HEK293T (cell line): ENCODE measurements at regions of chr19 and their contacts with region 1.

Region 1: DNA sequence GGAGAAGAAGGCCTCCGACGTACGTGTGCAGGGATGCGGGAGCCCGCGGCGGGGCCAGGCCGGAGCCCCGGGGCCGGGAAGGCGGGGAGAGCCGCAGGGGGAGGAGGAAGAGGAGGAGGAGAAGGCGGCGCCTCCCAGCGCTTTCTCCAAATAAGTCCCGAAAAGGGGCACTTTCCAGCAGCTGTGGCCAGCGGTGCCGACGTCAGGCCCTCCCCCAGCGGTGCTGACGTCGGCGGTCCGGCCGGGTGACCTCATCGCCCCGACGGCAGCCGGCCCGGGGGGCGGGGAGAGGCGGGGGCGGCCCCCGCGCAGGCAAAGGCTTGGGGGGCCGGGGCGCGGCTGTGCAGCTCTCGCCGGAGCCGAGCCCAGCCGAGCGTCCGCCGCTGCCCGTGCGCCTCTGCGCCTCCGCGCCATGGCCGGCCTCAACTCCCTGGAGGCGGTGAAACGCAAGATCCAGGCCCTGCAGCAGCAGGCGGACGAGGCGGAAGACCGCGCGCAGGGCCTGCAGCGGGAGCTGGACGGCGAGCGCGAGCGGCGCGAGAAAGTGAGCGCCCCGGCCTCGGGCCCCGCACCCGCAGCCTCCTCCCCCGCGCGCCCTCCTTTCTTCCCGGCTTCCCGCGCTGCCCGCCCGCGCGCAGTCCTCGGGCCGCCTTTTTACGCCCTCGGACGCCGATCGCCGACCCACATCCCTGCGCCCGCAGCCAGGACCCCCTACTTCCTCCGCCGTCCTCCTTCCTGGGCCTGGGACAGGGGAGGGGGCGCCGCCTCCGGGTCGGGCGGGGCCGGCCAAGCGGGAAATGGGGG is at the start of gene TPM4:
- DNase-seq: peak; percentile 76

Region 2: DNA sequence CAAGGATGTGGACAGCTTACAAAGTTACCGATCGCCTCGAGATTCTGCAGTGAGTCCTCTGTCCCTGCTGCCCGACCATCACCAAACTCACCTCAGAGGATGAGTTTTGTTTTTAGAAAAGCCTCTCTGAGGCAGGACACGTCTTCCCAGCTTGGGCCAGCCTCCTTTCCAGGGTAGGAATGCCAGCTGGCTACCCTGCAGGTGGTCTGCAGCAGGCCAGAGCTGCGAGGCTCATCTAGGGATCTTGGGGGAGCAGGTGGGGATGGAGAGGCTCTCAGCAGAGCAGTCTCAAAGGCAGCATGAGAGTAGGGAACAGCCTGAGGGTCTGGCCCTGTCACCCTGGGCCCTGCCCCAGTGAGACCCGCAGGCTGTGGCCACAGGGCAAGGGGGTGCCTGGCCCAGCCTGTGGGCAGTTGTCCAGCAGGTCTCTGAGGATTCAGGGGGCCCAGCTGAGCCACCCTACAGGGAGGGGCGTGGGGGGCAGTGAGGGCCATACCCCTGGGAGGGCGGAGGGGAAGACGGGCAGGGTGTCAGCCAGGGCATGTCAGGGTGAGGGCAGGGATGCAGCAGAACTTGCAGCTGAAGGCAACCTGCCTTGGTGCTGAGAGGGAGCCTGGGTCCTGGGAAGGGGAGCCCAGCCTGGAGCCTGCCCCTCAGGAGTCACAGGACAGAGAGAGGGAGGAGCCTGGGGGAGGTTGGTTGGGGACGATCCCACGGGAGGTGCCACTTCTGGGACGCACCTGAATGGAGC is 57.4 kb before region 1 on chr19:
- CTCF ChIA-PET with region 1: no interaction called
- POLR2A ChIA-PET with region 1: no interaction called
- DNase-seq: no peak

Region 3: DNA sequence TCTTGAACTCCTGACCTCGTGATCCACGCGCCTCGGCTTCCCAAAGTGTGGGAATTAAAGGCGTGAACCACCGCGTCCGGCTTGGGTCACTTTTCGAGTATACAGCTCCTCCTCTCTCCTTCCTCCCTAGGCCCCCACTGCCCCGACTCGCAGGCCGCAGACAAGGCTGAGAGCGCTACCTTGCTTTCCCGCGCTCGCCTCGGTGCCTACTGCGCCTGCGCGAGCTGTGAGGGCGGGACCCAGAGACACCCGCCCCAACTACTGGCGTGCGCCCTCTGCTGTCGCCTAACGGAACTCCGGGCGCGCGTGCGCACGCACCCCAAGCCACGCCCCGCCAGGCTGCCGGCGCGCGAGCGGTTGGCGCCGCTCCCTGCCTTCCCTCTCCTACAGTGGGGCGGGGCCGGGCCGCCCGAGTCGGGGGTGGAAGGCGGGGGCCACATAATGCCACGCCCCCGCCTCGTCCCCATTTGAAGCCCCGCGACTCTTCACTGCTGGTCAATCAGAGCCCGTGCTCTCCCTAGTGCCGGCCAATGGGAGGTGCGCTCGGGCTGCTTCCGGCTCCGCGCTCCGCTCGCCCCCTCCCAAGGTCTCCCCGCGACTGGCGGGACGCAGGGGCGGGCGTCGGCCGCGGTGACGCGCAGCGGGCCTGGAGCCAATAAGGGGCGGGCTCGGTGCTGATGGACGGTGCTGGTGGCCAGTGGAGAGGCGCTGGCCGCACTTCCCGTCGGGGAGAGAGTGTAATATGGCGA is 35.0 kb after region 1 on chr19 and contains the start of gene RAB8A:
- CTCF ChIA-PET with region 1: no interaction called
- POLR2A ChIA-PET with region 1: interaction called, 11 read pairs
- DNase-seq: peak; percentile 97

Region 4: GRCh38 chr19:16205205-16206045 is 129.1 kb after region 1 on chr19:
- CTCF ChIA-PET with region 1: no interaction called
- POLR2A ChIA-PET with region 1: no interaction called
- DNase-seq: no peak